Left cardiac atrium (tissue), 4 donors: ENCODE measurements at regions of chr1 and their contacts with region 1.

Region 1: GRCh38 chr1:173714759-173715537 is at the start of gene KLHL20:
- DNase-seq: peak; percentile 82
- ATAC-seq: peak; percentile 97 to 99
- total RNA-seq, gene KLHL20: 17.3 to 19.8 TPM

Region 2: GRCh38 chr1:173269490-173270230 is 445.3 kb before region 1 on chr1:
- intact Hi-C with region 1: no loop called
- DNase-seq: no peak
- ATAC-seq: no peak

Region 3: DNA sequence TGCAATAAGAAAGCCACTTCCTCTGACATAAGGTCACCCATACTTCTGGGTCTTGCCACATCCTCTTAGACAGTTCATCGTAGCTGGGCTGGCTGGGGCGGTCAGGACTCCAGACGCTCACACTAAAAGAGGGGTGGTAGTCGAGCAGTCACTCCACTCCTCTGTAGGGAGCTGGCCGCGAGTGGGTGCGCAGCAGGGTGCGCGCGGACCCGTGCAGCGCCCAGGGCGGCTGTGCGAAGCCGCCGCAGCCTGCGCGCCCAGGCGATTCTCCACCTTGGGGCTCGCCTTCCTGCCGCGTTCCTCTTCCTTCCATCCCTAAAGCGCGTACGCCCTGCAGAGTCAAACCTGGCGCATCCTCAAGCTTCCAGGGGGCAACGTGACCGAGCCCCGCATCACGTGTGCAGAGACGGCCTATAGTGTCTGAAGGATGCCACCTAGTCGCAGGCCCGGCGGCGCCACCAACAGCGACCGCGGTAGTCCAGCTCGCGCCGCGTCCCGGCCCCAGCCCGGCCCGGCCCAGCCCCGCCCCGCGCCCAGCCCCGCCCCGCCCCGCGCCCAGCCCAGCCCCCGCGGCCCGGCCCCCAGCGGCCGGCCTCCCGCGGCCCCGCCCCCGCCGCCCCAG is 238.2 kb before region 1 on chr1:
- intact Hi-C with region 1: loop called in 1 of 2 experiments (anchors 5 kb)
- DNase-seq: peak; percentile 93
- ATAC-seq: peak; percentile 87 to 89

Region 4: DNA sequence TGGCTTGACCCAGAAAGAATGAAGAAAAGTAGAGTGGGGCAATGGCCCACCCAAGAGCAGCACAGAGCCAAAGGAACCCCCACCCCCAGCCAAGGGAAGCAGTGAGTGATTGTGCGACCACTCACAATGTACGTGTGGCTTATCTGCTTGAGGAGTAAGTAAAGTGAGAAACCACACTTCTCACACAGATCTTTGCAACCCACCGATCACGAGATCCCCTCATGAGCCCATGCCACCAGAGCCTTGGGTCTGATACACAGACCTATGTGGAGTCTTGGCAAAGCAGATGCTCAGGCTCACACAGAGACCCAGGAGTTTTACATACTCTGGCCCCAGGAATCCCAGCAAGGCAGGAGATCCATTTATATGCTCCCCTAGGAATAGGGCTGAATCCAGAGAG is 98.1 kb before region 1 on chr1:
- intact Hi-C with region 1: no loop called
- DNase-seq: no peak
- ATAC-seq: no peak